ENCODE measurements at regions of chr2 and their contacts with region 1.

Region 1: DNA sequence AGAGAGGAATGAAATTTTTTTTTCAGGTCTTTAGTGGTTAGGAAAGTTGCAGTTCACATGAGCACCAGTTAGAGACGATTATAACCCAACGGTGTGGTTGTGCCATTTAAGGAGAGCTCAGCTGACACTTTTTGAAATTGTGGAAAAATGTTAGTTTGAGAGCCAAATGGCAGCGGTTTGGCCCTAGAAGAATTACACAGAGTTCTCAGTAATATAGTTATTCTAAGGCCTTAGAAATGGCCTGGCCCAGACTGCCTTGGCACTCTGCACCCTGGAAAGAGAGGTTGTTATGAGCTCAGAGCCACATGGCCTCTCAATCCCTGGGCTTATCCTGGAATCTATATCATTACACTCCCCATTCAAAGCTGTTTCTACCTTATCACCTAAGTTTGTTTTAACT is 117.4 kb downstream of the RHBDD1 start:
- DNase-seq: no peak
- ATAC-seq: no peak
- H3K4me3 Mint-ChIP-seq: no peak overlapping the region
- H3K27ac Mint-ChIP-seq: no peak overlapping the region
- H3K4me1 Mint-ChIP-seq: peaks cover 19% of the 10 kb centered on the region
- H3K27me3 Mint-ChIP-seq: no peaks in the 10 kb centered on the region
- CTCF ChIP-seq: no peak

Region 2: DNA sequence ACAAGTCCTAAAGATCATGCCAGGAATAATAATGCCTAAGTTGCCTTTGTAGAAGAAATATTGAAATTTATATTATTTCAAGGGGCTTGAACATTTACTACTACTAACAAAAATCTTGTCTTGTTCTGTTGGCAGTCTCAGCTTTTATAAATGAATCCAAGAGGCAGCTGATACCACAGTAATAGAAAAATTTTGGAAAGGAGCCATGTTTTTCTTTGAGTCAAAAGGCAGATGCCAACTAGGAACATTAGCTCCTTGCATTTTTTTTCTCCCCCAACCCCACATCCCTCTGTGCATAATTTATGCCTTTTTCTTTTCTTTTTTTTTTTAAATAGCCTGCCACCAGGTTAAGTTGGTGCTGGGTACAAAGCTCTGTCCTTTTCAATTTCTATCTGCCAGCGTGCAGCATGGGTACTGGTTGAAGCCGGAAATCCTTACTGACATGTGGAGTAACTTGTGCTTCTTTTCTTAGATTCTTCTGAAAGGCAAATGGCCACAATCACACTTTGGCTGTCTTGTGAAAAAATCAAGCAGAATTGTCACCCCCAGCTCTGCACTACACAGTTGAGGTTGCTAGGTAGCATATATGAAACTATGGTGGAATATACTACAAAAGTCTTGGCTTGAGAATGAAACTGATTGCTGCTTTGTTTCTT is 18.5 kb before region 1 on chr2:
- CTCF ChIA-PET with region 1: no interaction called
- POLR2A ChIA-PET with region 1: no interaction called
- intact Hi-C with region 1: loop called (anchors 2 kb)
- DNase-seq: no peak
- ATAC-seq: no peak
- H3K4me3 Mint-ChIP-seq: no peak overlapping the region
- H3K27ac Mint-ChIP-seq: no peak overlapping the region
- H3K4me1 Mint-ChIP-seq: peaks cover 17% of the 10 kb centered on the region
- H3K27me3 Mint-ChIP-seq: no peaks in the 10 kb centered on the region
- CTCF ChIP-seq: no peak

Measured in activated B cell treated with CpG ODN at 0.5 μM for 24 hours (primary cell).